HepG2 (cell line): ENCODE measurements at regions of chr3 and their contacts with region 1.

Region 1: GRCh38 chr3:161423911-161424522 is 52.7 kb upstream of the SPTSSB start:
- DNase-seq: peak; percentile 41
- ATAC-seq: no peak
- H3K4me3 ChIP-seq: no peak overlapping the region
- H3K27ac ChIP-seq: no peak overlapping the region
- H3K4me1 ChIP-seq: peaks cover 53% of the 10 kb centered on the region
- H3K27me3 ChIP-seq: peaks cover 0 to 4% of the 10 kb centered on the region in 2 experiments; a peak in 1 of 5 replicates
- CTCF ChIP-seq: peak; percentile 64
- EP300 ChIP-seq: no peak
- POLR2A ChIP-seq: no peak
- RAD21 ChIP-seq: peak; percentile 67; the same call in 1 of the 2 replicates

Region 2: DNA sequence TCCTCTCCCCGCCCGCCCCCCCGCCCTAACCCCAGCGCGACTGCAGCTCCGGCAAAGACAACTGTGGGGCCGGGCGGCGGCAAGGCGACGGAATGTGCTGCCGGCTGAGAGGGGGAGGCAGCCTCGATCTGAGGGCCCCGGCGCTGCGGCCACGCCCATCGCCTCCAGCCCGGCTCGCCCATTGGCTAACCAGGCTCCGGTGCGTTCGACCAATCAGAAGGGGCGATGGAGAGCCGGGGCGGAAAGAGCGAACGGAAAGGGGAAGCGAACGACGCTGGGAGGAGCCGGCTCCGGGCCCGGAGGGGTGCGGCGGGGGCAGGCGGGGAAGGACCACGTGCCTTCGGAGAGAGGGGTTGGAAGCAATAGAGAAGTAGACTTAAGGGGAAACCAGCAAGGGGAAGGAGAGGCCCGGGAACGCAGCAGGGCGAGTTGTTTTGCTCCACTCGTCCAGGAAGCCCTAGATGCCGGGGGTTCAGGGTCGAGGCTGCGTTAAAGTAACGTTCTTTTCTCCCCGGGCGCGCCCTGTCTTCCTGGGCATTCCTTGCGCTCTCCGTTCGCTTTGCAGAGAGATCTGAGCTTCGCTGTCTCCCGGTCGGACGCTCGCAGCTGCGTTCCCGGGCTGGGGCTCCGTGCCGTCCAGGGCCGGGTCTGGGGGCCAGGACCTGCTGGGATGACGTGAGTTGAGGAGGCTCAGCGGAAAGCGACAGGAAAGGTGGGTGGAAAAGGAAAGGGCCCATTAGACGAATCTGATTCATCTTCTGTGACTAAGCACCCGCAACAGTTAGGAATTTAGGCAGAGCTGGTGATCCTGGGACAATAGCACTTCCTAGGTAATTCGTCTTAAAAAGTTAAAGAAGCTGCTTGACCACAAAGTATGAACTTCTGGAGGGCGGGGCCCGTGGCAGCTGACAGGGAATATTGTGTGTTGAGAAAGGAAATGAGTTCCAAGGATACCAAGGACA is 858.3 kb before region 1 on chr3 and contains the start of gene KPNA4:
- CTCF ChIA-PET with region 1: no interaction called
- POLR2A ChIA-PET with region 1: no interaction called
- in situ Hi-C with region 1: no loop called
- intact Hi-C with region 1: loop called (anchors 10 kb)
- DNase-seq: peak; percentile 92
- ATAC-seq: peak; percentile 95
- H3K4me3 ChIP-seq: peak within 1 kb of the TSS; percentile 86 to 95 (median 86)
- H3K27ac ChIP-seq: peak within 1 kb of the TSS; percentile 92
- H3K4me1 ChIP-seq: peaks cover 41% of the 10 kb centered on the region
- H3K27me3 ChIP-seq: no peaks in the 10 kb centered on the region; a peak in 1 of 5 replicates
- CTCF ChIP-seq: no peak
- EP300 ChIP-seq: no peak
- POLR2A ChIP-seq: peak; percentile 78 to 84
- RAD21 ChIP-seq: no peak
- total RNA-seq, gene KPNA4: 27.9 and 32.6 TPM in 2 replicates

Region 3: GRCh38 chr3:160707187-160707794 is 716.7 kb before region 1 on chr3:
- CTCF ChIA-PET with region 1: interaction called, 4 read pairs
- POLR2A ChIA-PET with region 1: no interaction called
- in situ Hi-C with region 1: loop called (anchors 10 kb)
- intact Hi-C with region 1: loop called (anchors 5 kb)
- DNase-seq: peak; percentile 38
- ATAC-seq: peak; percentile 70
- H3K4me3 ChIP-seq: no peak overlapping the region
- H3K27ac ChIP-seq: no peak overlapping the region
- H3K4me1 ChIP-seq: no peaks in the 10 kb centered on the region
- H3K27me3 ChIP-seq: no peaks in the 10 kb centered on the region
- CTCF ChIP-seq: peak; percentile 53
- EP300 ChIP-seq: no peak
- POLR2A ChIP-seq: no peak
- RAD21 ChIP-seq: no peak

Region 4: DNA sequence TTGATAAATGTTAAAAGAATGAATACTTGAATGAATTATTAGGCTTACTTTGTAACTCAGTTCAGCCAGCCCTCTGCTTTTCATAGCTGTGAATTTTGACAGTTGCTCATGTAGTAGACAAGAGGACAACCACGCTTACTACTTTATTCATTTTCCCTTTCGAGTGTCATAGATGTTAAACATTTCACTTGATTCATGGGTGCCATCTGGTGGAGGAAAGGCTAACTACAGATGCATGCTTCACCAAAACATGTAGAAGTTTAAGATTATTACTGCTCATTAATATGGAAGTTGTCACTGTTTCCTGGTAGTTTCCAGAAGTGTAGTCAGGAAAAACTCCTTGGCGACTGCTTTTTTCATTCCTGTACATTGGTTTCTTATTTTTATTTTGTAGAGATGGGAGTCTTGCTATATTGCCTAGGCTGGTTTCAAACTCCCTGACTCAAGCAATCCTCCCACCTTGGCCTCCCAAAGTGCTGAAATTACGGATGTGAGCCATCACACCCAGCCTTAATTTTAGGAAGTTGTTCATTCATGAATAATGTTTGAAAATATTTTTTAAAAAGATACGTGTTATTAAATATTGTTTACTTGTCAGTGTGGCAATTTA is 482.0 kb before region 1 on chr3:
- CTCF ChIA-PET with region 1: no interaction called
- POLR2A ChIA-PET with region 1: no interaction called
- in situ Hi-C with region 1: no loop called
- intact Hi-C with region 1: loop called (anchors 5 kb)
- DNase-seq: peak; percentile 61
- ATAC-seq: peak; percentile 79
- H3K4me3 ChIP-seq: no peak overlapping the region
- H3K27ac ChIP-seq: no peak overlapping the region
- H3K4me1 ChIP-seq: no peaks in the 10 kb centered on the region
- H3K27me3 ChIP-seq: no peaks in the 10 kb centered on the region
- CTCF ChIP-seq: peak; percentile 78
- EP300 ChIP-seq: no peak
- POLR2A ChIP-seq: no peak
- RAD21 ChIP-seq: peak; percentile 32; the same call in 1 of the 2 replicates

Region 5: GRCh38 chr3:161096771-161097355 is 327.2 kb before region 1 on chr3:
- CTCF ChIA-PET with region 1: interaction called, 16 read pairs
- POLR2A ChIA-PET with region 1: no interaction called
- in situ Hi-C with region 1: loop called (anchors 5 kb)
- intact Hi-C with region 1: loop called (anchors 1 kb)
- DNase-seq: peak; percentile 38
- ATAC-seq: peak; percentile 78
- H3K4me3 ChIP-seq: no peak overlapping the region
- H3K27ac ChIP-seq: no peak overlapping the region
- H3K4me1 ChIP-seq: peaks cover 10% of the 10 kb centered on the region
- H3K27me3 ChIP-seq: no peaks in the 10 kb centered on the region
- CTCF ChIP-seq: peak; percentile 61
- EP300 ChIP-seq: no peak
- POLR2A ChIP-seq: no peak
- RAD21 ChIP-seq: peak; percentile 43; the same call in 1 of the 2 replicates

Region 6: DNA sequence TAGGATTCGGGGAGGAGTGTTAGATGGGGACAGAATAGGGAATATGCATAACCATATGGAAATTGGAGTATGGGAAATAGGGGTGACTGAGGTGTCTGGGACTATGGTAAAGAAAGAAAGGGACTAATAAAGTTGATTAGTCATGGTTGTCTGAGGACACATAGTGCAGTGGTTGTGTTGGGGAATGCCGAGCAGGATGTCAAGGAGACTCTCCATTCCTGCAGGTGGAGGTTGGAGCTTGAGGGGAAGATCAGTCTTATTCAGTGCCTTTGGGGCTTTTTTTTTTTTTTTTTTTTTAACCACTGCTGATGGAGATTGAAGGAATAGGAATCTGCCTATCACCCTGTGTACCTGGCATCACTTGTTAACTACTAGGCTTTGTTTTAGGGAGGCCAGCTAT is 192.2 kb before region 1 on chr3:
- CTCF ChIA-PET with region 1: no interaction called
- POLR2A ChIA-PET with region 1: no interaction called
- in situ Hi-C with region 1: no loop called
- intact Hi-C with region 1: no loop called
- DNase-seq: no peak
- ATAC-seq: no peak; the same call in 2 of the 3 replicates
- H3K4me3 ChIP-seq: no peak overlapping the region
- H3K27ac ChIP-seq: no peak overlapping the region
- H3K4me1 ChIP-seq: peaks cover 11% of the 10 kb centered on the region; the same call in 1 of the 2 replicates
- H3K27me3 ChIP-seq: no peaks in the 10 kb centered on the region
- CTCF ChIP-seq: no peak
- EP300 ChIP-seq: no peak
- POLR2A ChIP-seq: no peak
- RAD21 ChIP-seq: no peak

Region 7: DNA sequence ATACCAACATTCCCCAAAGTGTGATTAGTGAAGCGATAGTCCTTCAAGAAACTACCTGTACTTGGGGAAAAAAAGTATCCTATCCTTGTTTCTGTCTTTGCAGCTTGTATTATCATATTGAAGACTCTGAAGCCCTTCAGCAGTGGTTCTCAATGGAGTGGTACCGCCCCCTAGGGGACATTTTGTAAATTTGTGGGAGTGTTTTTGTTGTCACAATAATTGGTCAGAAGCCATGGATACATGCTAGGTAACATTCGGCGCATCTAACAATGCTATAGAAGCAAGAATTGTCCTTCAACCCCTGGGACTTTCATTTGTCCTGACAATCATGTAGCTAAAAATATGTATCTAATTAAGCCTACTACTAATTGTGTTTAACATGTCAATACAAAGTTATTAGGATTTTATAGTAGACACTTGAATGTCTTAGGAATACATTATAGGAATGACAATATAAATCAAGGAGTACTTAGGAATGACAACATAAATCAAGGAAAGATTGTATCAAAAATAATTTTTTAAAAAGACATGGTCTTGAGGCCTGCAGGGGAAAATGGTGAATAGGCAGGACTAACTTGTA is 149.2 kb before region 1 on chr3:
- CTCF ChIA-PET with region 1: interaction called, 39 read pairs
- POLR2A ChIA-PET with region 1: no interaction called
- in situ Hi-C with region 1: no loop called
- intact Hi-C with region 1: loop called (anchors 1 kb)
- DNase-seq: peak; percentile 51
- ATAC-seq: peak; percentile 85
- H3K4me3 ChIP-seq: no peak overlapping the region
- H3K27ac ChIP-seq: no peak overlapping the region
- H3K4me1 ChIP-seq: peaks cover 24% of the 10 kb centered on the region
- H3K27me3 ChIP-seq: no peaks in the 10 kb centered on the region
- CTCF ChIP-seq: peak; percentile 52
- EP300 ChIP-seq: no peak
- POLR2A ChIP-seq: no peak
- RAD21 ChIP-seq: 0 out of 2 replicates have a peak, but pooled peaks have one; percentile 36